GM10248 (cell line): ENCODE measurements at regions of chr20 and their contacts with region 1.

Region 1: GRCh38 chr20:33981964-33982363 is 11.7 kb upstream of the RALY start:
- DNase-seq: no peak
- CTCF ChIP-seq: no peak

Region 2: GRCh38 chr20:32528171-32528891 is 1453.6 kb before region 1 on chr20:
- CTCF ChIA-PET with region 1: no interaction called
- POLR2A ChIA-PET with region 1: interaction called, 11 read pairs
- DNase-seq: no peak
- CTCF ChIP-seq: no peak

Region 3: DNA sequence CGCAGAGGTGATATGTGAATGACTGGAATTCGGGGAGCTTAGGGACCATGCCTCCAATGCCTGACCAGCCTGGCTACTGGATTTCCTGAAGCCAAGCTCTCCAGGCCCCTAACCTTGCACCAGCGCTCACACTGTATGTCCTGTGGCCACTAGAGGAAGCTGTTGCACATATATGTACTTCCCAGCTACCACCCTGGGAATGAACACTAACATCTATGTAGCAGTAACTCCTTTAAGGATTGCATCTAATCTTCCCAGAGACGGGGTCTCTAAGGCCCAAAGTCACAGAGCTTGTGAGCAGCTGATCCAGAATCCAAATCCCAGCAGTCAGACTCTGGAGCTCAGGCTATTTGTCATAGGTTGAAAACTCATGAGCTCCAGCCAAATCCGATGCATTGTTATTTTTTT is 719.3 kb before region 1 on chr20:
- CTCF ChIA-PET with region 1: no interaction called
- POLR2A ChIA-PET with region 1: no interaction called
- DNase-seq: no peak
- CTCF ChIP-seq: peak; percentile 6

Region 4: DNA sequence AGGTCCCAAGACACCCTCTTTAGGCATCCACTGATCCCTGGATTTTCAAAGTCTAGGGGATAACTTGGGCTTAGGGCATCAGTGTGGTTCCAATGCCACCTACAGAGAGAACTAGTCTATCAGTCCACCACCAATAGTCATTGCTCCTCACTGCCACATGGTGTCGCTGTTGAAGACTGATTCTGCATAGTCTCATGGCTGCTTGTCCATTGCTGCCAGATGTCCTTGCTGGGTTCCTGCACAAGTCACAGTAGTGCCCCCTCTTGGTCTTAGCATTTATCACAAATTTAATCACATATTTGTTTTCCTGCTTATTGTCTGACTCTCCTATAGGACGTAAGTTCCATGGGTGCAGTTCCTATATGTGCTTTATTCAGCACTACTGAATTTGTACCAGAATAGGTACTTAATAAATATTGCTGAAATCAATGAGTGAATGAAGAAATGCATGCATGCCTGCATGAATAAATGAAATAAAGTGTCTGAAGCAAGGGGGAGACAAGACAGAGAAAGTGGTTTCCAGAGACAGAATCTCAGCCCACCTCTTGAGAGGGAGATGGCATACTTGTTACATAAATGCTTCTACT is 34.2 kb before region 1 on chr20:
- CTCF ChIA-PET with region 1: no interaction called
- POLR2A ChIA-PET with region 1: no interaction called
- DNase-seq: no peak
- CTCF ChIP-seq: peak; percentile 36

Region 5: DNA sequence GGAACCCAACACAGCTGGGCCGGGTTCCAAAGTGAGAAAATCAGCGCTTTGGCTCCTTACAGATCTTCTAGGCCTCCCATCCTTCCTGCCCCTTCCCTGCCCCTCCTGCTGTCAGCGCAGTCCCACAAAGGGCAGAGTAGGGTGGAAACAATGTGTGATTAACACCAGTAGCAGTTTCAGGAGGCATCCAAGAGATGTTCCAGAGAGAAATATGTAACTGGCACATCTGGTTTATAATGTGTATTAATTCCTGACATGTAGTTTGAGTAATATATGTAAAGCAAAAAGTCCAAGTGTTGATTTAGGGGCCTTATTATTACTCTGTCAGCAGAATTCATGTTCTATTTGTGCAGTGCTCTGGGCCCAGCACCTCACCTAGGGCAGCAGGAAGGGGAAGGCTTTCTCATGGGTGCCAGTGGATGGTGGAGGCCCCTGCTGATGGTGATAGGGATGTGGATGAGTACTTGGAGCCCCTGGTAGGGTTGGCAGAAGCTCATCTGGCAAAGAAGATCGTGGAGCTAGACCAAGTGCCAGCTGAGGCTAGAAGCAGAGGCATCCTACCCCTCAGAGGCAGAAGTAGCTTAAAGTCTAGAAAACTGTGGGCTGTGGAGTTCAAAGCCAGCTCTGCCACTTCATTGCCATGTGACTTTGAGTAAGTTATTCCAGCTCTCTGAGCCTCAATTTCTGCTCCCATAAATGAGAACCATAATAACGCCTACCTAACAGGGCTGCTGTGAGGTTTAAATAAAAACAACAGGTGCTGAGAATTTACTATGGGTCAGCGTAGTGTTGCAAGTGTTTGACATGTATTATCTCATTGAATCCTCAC is 10.6 kb before region 1 on chr20:
- CTCF ChIA-PET with region 1: interaction called, 15 read pairs
- POLR2A ChIA-PET with region 1: no interaction called
- DNase-seq: no peak
- CTCF ChIP-seq: no peak

Region 6: DNA sequence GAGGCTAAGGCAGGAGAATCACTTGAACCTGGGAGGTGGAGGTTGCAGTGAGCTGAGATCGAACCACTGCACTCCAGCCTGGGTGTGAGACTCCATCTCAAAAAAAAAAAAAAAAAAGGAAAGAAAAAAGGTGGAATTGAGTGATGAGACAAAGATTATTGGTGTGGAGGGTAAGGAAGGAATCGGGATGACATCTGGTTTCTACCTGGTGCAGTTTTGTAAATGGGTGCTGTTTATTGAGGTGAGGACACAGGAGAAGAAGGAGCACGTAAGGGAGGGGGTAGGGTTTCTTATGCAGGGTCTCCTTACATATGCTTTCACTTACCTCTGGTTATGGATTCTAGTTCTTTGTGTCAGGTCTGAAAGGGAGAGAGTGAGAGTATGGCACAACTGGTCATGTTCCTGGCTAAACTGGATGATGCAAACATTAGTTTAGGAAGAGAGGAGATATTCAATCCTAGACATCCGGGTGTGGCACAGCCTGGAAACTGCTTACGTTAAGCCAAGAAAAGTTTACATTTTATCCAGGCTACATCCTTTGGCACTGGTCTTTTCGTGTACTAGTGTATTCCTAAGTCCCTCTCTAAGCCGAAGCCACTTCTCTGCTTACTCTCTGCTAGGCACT is 17.2 kb after region 1 on chr20:
- CTCF ChIA-PET with region 1: no interaction called
- POLR2A ChIA-PET with region 1: no interaction called
- DNase-seq: no peak
- CTCF ChIP-seq: no peak

Region 7: DNA sequence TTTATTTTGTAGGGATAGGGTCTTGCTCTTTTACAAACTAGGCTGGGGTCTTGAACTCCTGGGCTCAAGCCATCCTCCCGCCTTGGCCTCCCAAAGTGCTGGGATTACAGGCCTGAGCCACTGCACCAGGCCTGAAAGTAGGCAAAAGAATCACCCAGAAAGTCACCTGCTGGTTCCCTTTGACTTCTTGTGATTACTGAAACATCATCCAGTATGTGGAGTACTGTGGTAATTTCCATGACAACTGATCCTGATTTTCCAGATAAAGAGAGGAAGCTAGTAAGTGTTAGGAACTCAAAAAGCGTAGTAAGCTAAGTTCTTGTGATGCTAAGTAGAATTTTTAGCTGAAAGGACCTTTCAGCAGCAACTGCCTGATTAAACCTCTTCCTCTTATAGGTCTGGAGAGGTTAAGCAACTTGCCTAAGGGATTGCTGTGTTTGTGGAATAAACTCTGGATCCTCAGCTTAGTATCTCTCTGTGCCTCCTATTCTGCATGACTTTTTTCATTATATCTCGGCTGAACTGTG is 28.5 kb after region 1 on chr20:
- CTCF ChIA-PET with region 1: no interaction called
- POLR2A ChIA-PET with region 1: no interaction called
- DNase-seq: no peak
- CTCF ChIP-seq: no peak